ENCODE measurements at regions of chr6 and their contacts with region 1.

Region 1: GRCh38 chr6:29589423-29590048 is 4.6 kb downstream of the OR2H2 start:
- DNase-seq: peak; percentile 62
- H3K4me3 ChIP-seq: no peak overlapping the region
- H3K27ac ChIP-seq: no peak overlapping the region
- H3K4me1 ChIP-seq: no peaks in the 10 kb centered on the region
- H3K27me3 ChIP-seq: peaks cover 6% of the 10 kb centered on the region
- CTCF ChIP-seq: peak; percentile 92

Region 2: GRCh38 chr6:28710466-28711191 is 878.9 kb before region 1 on chr6:
- CTCF ChIA-PET with region 1: interaction called, 12 read pairs
- POLR2A ChIA-PET with region 1: no interaction called
- intact Hi-C with region 1: no loop called
- DNase-seq: peak; percentile 80
- H3K4me3 ChIP-seq: peak overlapping the region; percentile 37
- H3K27ac ChIP-seq: no peak overlapping the region
- H3K4me1 ChIP-seq: no peaks in the 10 kb centered on the region
- H3K27me3 ChIP-seq: no peaks in the 10 kb centered on the region
- CTCF ChIP-seq: no peak

Region 3: DNA sequence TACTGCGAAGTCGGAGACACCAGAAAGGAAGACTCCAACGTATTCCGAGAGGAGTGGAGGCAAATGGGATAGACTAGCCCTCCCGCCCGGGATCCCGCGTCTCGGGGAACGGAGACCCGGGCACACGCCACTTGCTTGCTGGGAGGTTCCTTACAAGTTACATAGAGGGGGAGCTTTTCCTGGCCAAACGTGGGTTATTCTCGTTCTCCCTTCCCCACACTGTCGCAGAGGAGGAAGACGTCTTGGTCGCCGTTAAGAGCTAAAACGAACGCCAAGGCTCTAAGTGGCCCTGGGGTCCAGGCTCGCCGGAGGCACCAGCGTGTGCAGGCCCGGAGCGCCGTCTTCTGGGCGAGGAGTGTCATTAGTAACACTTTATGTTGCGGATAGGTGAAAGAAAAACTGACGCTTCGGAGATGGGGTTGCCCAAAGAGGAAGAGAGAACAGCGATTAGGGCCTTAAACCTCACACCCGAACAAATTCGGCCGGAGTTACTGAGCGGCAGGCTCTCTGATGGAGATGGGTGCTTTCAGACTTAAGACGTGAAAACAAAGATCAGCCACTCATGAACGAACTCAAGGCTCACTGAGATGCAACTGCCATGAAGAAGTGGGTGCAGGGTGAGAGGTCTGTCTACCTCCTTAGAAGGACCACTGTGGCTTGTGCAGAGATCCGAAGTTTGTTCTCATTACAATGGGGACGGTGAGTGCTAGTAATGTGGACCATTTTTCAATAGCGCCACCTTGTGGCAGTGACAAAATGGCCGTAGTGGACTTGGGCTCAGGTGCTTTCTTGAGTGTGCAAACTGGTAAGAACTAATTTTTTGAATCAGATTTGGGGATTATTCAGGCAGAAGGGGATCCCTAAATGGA is 572.7 kb before region 1 on chr6:
- CTCF ChIA-PET with region 1: no interaction called
- POLR2A ChIA-PET with region 1: no interaction called
- intact Hi-C with region 1: loop called (anchors 10 kb)
- DNase-seq: peak; percentile 84
- H3K4me3 ChIP-seq: peak overlapping the region; percentile 54
- H3K27ac ChIP-seq: no peak overlapping the region
- H3K4me1 ChIP-seq: no peaks in the 10 kb centered on the region
- H3K27me3 ChIP-seq: no peaks in the 10 kb centered on the region
- CTCF ChIP-seq: peak; percentile 84

Region 4: GRCh38 chr6:29376003-29376402 is 213.5 kb before region 1 on chr6:
- CTCF ChIA-PET with region 1: no interaction called
- POLR2A ChIA-PET with region 1: no interaction called
- intact Hi-C with region 1: loop called (anchors 5 kb)
- DNase-seq: peak; percentile 19
- H3K4me3 ChIP-seq: no peak overlapping the region
- H3K27ac ChIP-seq: no peak overlapping the region
- H3K4me1 ChIP-seq: no peaks in the 10 kb centered on the region
- H3K27me3 ChIP-seq: peaks cover 15% of the 10 kb centered on the region
- CTCF ChIP-seq: no peak; the same call in 1 of the 2 replicates

Region 5: DNA sequence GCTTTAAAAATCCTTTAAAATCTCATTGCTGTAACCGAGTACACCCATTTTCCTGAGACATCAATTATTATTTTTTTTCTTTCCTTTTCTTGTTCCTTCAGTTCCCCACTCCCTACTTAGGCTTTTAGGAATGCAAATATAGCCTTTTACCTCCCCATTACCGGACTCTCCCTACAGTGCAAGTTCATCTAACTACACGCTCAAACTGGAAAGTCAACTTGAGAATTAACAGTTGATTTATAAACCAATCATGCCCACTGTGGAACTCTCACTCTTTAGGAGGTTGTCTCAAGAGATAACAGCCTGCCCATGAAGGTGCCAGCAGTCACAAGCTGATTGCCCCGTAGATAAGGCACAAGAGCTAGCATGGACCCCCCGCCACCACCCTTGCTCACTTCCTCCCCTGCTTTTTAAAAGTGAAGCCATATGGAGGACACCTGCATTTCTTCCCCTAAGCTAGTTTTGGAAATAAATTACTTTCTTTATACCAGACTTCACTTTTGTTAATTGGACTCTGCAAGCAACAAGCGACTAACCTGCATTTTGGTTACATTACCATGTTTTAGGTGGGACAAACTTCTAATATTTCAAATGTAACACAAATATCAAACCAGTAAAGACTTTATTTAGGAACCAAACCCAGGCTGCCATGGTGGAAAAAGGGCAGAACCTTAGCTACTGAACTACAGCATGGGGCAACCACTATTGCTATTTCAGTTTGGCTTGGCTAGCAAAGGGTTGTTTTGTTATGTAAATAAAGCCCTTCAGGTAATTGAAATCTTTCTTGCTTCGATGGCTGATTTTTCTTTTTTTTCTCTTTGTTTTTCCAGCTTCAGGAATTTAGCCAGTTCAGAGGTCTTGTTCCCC is 64.9 kb before region 1 on chr6:
- CTCF ChIA-PET with region 1: no interaction called
- POLR2A ChIA-PET with region 1: interaction called, 12 read pairs
- intact Hi-C with region 1: no loop called
- DNase-seq: no peak
- H3K4me3 ChIP-seq: no peak overlapping the region
- H3K27ac ChIP-seq: no peak overlapping the region
- H3K4me1 ChIP-seq: no peaks in the 10 kb centered on the region
- H3K27me3 ChIP-seq: peaks cover 15% of the 10 kb centered on the region
- CTCF ChIP-seq: no peak